Activated T-helper 1 cell treated with anti-CD3 and anti-CD28 coated beads, Interleukin-12 subunit alpha, Interleukin-12 subunit beta, Interleukin-2, Interleukin-4 antibody, amounts not matched to agents 30 ng/mL and 10 ng/mL and 1 ng/mL, durations not matched to agents 14 hours and 24 hours and 36 hours (primary cell): ENCODE measurements at regions of chr16 and their contacts with region 1.

Region 1: GRCh38 chr16:11586856-11587642 is at the start of gene LITAF:
- DNase-seq: peak; percentile 45
- H3K4me3 Mint-ChIP-seq: peak within 1 kb of the TSS; percentile 93
- H3K27ac Mint-ChIP-seq: peak within 1 kb of the TSS; percentile 92
- H3K4me1 Mint-ChIP-seq: peaks cover 38% of the 10 kb centered on the region
- H3K27me3 Mint-ChIP-seq: no peaks in the 10 kb centered on the region
- total RNA-seq, gene LITAF: 197 and 199 TPM in 2 replicates

Region 2: GRCh38 chr16:10944249-10945064 is 642.6 kb before region 1 on chr16 and contains the start of gene CLEC16A:
- intact Hi-C with region 1: loop called (anchors 1 kb)
- DNase-seq: peak; percentile 97
- H3K4me3 Mint-ChIP-seq: peak within 1 kb of the TSS; percentile 91
- H3K27ac Mint-ChIP-seq: peak within 1 kb of the TSS; percentile 80
- H3K4me1 Mint-ChIP-seq: peaks cover 56% of the 10 kb centered on the region
- H3K27me3 Mint-ChIP-seq: no peaks in the 10 kb centered on the region
- total RNA-seq, gene CLEC16A: 36.3 and 37.4 TPM in 2 replicates

Region 3: DNA sequence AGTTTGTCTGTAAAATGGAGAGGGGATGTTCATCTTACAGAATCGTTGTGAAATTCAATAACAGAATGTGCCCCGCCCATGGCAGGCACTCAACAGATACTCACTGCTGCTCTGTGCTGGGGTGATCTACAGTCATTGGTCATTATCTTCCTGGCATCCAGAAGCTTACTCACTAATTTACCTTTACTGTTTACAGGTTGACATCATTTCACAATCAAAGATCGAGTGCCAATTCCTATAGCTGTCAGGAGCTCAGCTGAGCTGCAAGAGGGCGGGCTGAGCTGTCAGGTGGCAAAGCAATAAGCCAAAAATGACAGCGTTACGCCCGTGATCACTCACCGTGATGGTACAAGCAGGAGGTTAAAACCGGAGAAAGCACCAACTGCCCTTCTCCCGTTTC is 51.6 kb before region 1 on chr16:
- intact Hi-C with region 1: loop called (anchors 1 kb)
- DNase-seq: no peak
- H3K4me3 Mint-ChIP-seq: no peak overlapping the region
- H3K27ac Mint-ChIP-seq: no peak overlapping the region
- H3K4me1 Mint-ChIP-seq: peaks cover 8% of the 10 kb centered on the region
- H3K27me3 Mint-ChIP-seq: peaks cover 2% of the 10 kb centered on the region

Region 4: GRCh38 chr16:11621920-11622651 is 35.0 kb after region 1 on chr16:
- intact Hi-C with region 1: loop called (anchors 2 kb)
- DNase-seq: peak; percentile 40
- H3K4me3 Mint-ChIP-seq: peak overlapping the region; percentile 71
- H3K27ac Mint-ChIP-seq: peak overlapping the region; percentile 83
- H3K4me1 Mint-ChIP-seq: peaks cover 33% of the 10 kb centered on the region
- H3K27me3 Mint-ChIP-seq: peaks cover 1% of the 10 kb centered on the region

Region 5: GRCh38 chr16:11742539-11743307 is 155.7 kb after region 1 on chr16 and contains the start of gene TXNDC11:
- intact Hi-C with region 1: loop called (anchors 5 kb)
- DNase-seq: peak; percentile 99
- H3K4me3 Mint-ChIP-seq: peak within 1 kb of the TSS; percentile 99
- H3K27ac Mint-ChIP-seq: peak within 1 kb of the TSS; percentile 93
- H3K4me1 Mint-ChIP-seq: peaks cover 54% of the 10 kb centered on the region
- H3K27me3 Mint-ChIP-seq: no peaks in the 10 kb centered on the region
- total RNA-seq, gene TXNDC11: 52.7 and 55.9 TPM in 2 replicates

Region 6: DNA sequence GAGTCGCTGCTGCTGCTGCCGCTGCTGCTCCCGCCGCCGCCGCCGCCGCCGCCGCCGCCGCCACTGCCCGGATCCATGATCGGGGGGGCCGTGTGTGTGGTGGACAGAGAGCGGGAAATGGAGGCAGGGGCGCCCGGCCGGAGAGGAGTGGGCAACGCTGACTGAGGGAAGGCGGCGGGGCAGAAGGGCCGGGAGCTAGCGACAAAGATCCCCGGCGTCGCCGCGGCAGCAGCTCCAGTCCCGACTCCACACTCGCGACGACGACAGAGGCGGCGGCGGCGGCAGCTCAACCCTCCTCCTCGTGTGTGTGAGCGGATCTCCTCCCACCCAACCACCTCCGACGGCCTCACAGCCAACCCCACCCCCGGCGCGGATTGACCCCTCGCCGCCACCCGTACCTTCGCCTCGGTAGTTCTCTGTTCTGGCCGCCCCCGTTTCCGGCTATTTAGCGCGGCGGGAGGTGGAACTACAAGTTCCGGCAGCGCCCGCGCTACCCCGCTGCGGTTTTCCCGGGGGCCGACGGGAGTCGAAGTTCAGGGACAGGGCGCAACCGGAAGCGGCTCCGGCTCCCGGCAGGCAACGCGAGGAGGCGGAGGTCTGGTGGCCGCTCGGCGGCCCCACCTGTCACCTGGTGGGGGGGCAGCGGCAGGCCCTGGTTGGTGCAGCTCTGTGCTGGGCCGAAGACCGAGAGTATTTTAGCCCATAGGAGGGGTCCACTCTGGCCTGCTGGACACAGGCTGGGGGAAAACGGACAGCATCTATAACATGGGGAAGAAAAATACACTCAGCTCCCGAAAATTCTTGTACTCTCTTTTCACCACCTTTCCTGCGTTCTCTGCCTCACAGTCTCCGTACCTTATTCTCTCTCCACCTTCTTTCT is 328.8 kb after region 1 on chr16 and contains the start of gene GSPT1:
- intact Hi-C with region 1: loop called (anchors 2 kb)
- DNase-seq: peak; percentile 99
- H3K4me3 Mint-ChIP-seq: peak within 1 kb of the TSS; percentile 91
- H3K27ac Mint-ChIP-seq: peak within 1 kb of the TSS; percentile 94
- H3K4me1 Mint-ChIP-seq: peaks cover 32% of the 10 kb centered on the region
- H3K27me3 Mint-ChIP-seq: peaks cover 8% of the 10 kb centered on the region
- total RNA-seq, gene GSPT1: 207 and 214 TPM in 2 replicates